GM12878 (cell line): ENCODE measurements at regions of chr7 and their contacts with region 1.

Region 1: DNA sequence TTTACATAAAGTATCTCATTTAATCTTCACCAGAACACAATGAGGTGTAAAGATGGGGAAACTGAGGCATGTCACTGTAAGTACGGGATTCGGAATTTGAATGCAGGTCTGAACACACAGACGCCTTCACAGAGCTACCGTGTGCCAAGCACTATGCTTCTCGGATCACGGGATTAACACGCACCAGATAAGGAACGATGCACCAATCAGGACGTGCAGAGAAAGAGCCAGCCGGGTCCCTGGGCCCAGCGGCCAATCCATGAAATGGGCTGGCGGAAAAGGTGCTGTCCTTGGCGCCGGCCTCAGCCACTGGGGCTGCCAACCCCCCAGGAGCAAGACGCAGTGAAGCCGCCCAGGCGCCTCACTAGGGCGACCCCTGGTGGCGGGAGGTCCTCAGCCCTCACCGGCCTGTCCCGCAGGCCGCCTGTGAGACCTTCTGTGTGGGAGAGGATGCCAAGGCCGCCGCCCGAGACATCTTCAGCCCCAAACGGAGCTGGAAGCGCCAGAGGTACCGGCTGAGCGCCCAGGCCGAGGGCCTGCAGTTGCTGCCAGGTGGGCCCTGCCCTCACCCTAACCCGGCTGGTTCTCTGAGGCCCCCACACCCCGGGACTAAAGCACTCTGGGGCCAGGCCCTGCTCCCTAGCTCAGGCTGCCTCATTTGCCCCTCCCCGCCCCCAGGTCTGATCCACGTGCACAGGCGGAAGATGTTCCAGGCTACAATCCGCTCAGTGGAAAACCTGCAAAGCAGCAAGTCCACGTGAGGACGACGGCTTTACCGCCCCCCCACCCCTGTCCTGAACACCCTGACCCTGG is 15.6 kb downstream of the ATG9B start:
- DNase-seq: peak; percentile 39
- ATAC-seq: peak; percentile 98
- H3K4me3 ChIP-seq: no peak overlapping the region
- H3K27ac ChIP-seq: no peak overlapping the region
- H3K4me1 ChIP-seq: peaks cover 2% of the 10 kb centered on the region; the same call in 1 of the 2 replicates
- H3K27me3 ChIP-seq: no peaks in the 10 kb centered on the region; a peak in 1 of 4 replicates
- CTCF ChIP-seq: peak; percentile 77 to 99 (median 89)
- EP300 ChIP-seq: 0 out of 4 replicates have a peak, but pooled peaks of 1 of the 2 experiments have one; percentile 19
- POLR2A ChIP-seq: no peak
- RAD21 ChIP-seq: peak; percentile 24; the same call in 1 of the 2 replicates

Region 2: DNA sequence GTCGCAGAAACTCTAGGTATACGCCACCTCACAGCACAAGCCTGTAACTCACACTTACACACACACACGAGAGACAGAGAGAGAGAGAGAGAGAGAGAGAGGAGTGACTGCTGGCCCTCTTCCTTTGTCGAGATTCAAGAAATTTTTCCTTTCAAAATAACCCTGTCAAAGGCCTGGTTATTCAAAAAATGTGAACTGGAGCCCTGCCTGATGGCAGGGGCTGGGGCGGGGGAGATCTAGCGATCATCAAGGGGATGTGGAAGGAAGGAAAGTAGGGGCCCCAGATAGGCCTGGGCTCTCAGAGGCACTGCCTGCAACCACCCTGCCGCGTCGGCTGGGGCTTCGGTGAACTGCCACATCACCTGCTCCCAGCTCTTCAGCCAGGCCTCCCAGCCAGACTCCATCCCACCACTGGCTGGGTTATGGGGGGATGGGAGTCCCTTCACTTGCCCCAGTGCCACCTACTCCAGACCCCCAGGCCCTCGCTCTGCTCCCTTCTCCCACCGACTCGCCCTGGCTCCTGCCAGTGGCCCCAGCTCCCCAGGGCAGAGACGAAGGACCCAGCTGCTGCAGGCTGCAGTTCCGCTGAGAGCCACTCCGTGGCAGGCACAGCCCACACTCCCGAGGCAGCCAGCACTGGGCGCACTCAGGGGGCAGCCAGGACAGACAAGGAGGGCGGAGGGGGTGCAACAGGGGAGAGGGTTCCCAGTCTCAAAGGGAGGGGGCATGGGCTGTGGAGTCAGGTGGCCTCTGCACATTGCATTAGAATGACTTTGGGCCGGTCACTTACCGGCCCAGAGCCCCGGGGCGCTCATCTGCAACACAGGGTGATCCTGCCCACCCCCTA is 45.9 kb before region 1 on chr7:
- CTCF ChIA-PET with region 1: interaction called, 13 read pairs
- POLR2A ChIA-PET with region 1: interaction called, 3 read pairs
- RAD21 ChIA-PET with region 1: interaction called, 3 read pairs
- SMC1A ChIA-PET with region 1: interaction called, 3 read pairs
- in situ Hi-C with region 1: no loop called
- intact Hi-C with region 1: loop called (anchors 1 kb)
- DNase-seq: no peak
- ATAC-seq: peak; percentile 97
- H3K4me3 ChIP-seq: no peak overlapping the region
- H3K27ac ChIP-seq: no peak overlapping the region
- H3K4me1 ChIP-seq: no peaks in the 10 kb centered on the region
- H3K27me3 ChIP-seq: no peaks in the 10 kb centered on the region; a peak in 2 of 4 replicates
- CTCF ChIP-seq: peak; percentile 91 to 95 (median 93)
- EP300 ChIP-seq: no peak
- POLR2A ChIP-seq: no peak
- RAD21 ChIP-seq: peak; percentile 88